ENCODE measurements at regions of chr17 and their contacts with region 1.

Region 1: GRCh38 chr17:58710936-58711775 is 18.8 kb downstream of the RAD51C start:
- DNase-seq: no peak
- H3K4me3 ChIP-seq: no peak overlapping the region
- H3K27ac ChIP-seq: no peak overlapping the region
- H3K4me1 ChIP-seq: no peaks in the 10 kb centered on the region
- H3K27me3 ChIP-seq: no peaks in the 10 kb centered on the region
- CTCF ChIP-seq: peak; percentile 47 to 66 (median 57)
- EP300 ChIP-seq: no peak
- POLR2A ChIP-seq: no peak

Region 2: DNA sequence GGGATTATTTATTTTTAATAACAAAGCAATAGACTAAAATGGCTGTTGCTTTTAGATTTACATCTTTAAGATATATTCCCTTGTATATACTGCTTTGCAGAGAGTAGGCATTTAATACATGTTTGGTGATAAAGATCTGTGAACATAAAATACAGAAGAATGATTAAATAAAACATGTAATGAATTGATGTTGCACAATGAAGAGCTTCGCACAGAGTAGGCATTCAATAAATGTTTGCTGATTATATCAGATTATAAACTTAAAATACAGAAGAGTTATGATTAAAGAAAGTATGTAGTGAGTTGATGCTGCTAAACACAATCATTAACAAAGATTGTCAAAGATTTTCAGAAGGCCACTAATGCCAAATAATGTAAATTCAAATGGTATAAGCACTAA is 247.3 kb before region 1 on chr17:
- intact Hi-C with region 1: no loop called
- DNase-seq: no peak
- H3K4me3 ChIP-seq: no peak overlapping the region
- H3K27ac ChIP-seq: no peak overlapping the region
- H3K4me1 ChIP-seq: no peaks in the 10 kb centered on the region
- H3K27me3 ChIP-seq: peaks cover 0 to 7% (median 0%) of the 10 kb centered on the region in 4 donors
- CTCF ChIP-seq: no peak
- EP300 ChIP-seq: no peak
- POLR2A ChIP-seq: no peak

Region 3: GRCh38 chr17:58643140-58643539 is 68.0 kb before region 1 on chr17:
- intact Hi-C with region 1: no loop called
- DNase-seq: no peak
- H3K4me3 ChIP-seq: no peak overlapping the region
- H3K27ac ChIP-seq: no peak overlapping the region
- H3K4me1 ChIP-seq: no peaks in the 10 kb centered on the region
- H3K27me3 ChIP-seq: no peaks in the 10 kb centered on the region
- CTCF ChIP-seq: no peak
- EP300 ChIP-seq: no peak
- POLR2A ChIP-seq: no peak

Region 4: DNA sequence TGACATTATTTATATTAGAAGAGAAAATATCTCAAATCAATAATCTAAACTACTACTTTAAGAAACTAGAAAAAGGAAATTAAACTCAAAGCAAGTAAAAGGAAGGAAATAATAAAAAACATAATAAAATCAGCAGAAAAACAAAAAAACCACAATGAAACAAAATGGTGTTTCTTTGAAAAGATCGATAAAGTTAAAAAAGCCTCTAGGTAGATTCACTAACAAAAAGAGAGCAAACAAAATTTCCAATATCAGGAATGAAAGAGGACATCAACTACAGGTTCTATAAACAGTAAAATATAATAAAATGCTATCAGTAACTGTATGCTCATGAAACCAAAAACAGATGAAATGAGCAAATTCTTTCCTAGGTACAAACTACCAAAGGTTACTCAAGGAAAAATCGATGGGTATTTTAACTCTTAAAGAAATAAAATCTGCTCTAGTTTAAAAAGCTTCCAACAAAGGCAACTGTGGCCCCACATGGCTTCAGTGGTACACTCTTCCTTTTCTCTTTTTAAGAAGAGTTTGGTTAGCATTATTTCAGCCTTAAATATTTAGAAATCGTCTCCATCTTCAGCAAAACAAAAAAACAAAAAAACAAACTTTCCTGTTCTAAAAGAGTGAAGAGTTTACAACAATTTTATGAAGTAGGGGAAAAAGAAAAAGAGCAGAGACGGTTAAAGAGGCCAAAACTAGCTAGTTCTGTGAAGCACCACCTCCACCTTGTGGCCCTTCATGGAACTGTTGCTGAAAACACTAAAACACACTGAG is 293.4 kb after region 1 on chr17:
- intact Hi-C with region 1: loop called (anchors 5 kb)
- DNase-seq: no peak
- H3K4me3 ChIP-seq: no peak overlapping the region
- H3K27ac ChIP-seq: no peak overlapping the region
- H3K4me1 ChIP-seq: no peaks in the 10 kb centered on the region
- H3K27me3 ChIP-seq: no peaks in the 10 kb centered on the region
- CTCF ChIP-seq: peak; percentile 92 to 94 (median 93)
- EP300 ChIP-seq: no peak
- POLR2A ChIP-seq: no peak